CD14-positive monocyte (primary cell): ENCODE measurements at regions of chr6 and their contacts with region 1.

Region 1: GRCh38 chr6:56637640-56638039 is 5.0 kb downstream of the DST start:
- DNase-seq: peak; percentile 11 to 35 (median 24)
- H3K4me3 ChIP-seq: no peak overlapping the region
- H3K4me3 Mint-ChIP-seq: no peak overlapping the region
- H3K27ac ChIP-seq: no peak overlapping the region
- H3K27ac Mint-ChIP-seq: no peak overlapping the region
- H3K4me1 ChIP-seq: no peaks in the 10 kb centered on the region
- H3K4me1 Mint-ChIP-seq: no peaks in the 10 kb centered on the region
- H3K27me3 ChIP-seq: no peaks in the 10 kb centered on the region
- H3K27me3 Mint-ChIP-seq: no peaks in the 10 kb centered on the region
- CTCF ChIP-seq: peak; percentile 82

Region 2: DNA sequence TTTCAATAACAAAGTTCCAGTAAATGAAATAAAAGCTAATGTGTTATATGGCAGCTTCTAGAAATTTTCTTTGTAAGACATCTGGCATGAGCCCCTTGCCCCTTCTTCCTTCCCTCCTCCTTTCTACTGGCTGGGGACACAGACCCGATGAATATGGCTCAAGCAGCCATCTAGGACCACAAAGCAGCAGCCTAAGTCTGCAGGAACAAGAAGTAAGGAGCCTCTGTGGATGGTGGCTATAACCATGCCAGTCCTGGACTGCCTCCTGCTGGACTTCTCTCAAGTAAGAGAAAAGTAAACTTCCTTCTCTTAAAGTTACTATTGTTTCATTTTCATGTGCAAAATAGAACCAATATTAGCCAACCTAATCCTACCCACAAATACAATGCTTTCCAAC is 119.9 kb after region 1 on chr6:
- intact Hi-C with region 1: loop called (anchors 10 kb)
- DNase-seq: peak; percentile 48 to 68 (median 63)
- H3K4me3 ChIP-seq: no peak overlapping the region
- H3K4me3 Mint-ChIP-seq: no peak overlapping the region
- H3K27ac ChIP-seq: no peak overlapping the region
- H3K27ac Mint-ChIP-seq: peak overlapping the region in 1 of 7 donors; percentile 23
- H3K4me1 ChIP-seq: peaks cover 0 to 8% of the 10 kb centered on the region in 2 donors
- H3K4me1 Mint-ChIP-seq: peaks cover 21% of the 10 kb centered on the region
- H3K27me3 ChIP-seq: no peaks in the 10 kb centered on the region
- H3K27me3 Mint-ChIP-seq: no peaks in the 10 kb centered on the region
- CTCF ChIP-seq: peak; percentile 67

Region 3: DNA sequence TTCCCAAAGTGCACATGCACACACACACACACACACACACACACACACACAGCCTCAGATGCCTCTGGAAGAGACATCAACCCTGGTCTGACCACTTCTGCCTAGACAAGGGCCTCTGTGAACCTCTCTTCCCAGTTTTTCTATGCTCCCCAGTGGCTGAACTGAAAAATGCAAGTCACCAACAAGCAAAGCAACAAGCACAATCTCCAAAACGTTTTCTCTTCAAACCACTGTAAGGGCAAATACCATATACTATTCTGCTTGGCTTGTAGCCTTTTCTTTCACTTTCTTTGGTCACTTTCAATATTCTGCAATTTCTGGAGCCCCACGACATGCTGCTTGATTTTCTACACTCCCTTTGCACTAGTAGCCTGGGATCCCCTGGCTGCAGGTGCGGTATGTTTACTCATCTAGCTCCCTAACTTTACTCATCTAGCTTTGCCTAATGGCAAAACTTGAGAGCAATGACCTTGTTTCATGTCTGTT is 126.5 kb after region 1 on chr6:
- intact Hi-C with region 1: loop called (anchors 10 kb)
- DNase-seq: peak in 2 of 3 donors; percentile 9 to 21
- H3K4me3 ChIP-seq: no peak overlapping the region
- H3K4me3 Mint-ChIP-seq: no peak overlapping the region
- H3K27ac ChIP-seq: no peak overlapping the region
- H3K27ac Mint-ChIP-seq: no peak overlapping the region
- H3K4me1 ChIP-seq: peaks cover 0 to 3% of the 10 kb centered on the region in 2 donors
- H3K4me1 Mint-ChIP-seq: peaks cover 14% of the 10 kb centered on the region
- H3K27me3 ChIP-seq: no peaks in the 10 kb centered on the region
- H3K27me3 Mint-ChIP-seq: peaks cover 0 to 2% (median 0%) of the 10 kb centered on the region in 3 donors
- CTCF ChIP-seq: peak; percentile 47

Region 4: GRCh38 chr6:56796196-56796532 is 158.5 kb after region 1 on chr6:
- intact Hi-C with region 1: no loop called
- DNase-seq: no peak
- H3K4me3 ChIP-seq: no peak overlapping the region
- H3K4me3 Mint-ChIP-seq: no peak overlapping the region
- H3K27ac ChIP-seq: no peak overlapping the region
- H3K27ac Mint-ChIP-seq: no peak overlapping the region
- H3K4me1 ChIP-seq: no peaks in the 10 kb centered on the region
- H3K4me1 Mint-ChIP-seq: peaks cover 10% of the 10 kb centered on the region
- H3K27me3 ChIP-seq: no peaks in the 10 kb centered on the region
- H3K27me3 Mint-ChIP-seq: no peaks in the 10 kb centered on the region
- CTCF ChIP-seq: no peak

Region 5: GRCh38 chr6:56851541-56852259 is 214.1 kb after region 1 on chr6:
- intact Hi-C with region 1: loop called in 1 of 2 experiments (anchors 5 kb)
- DNase-seq: peak; percentile 38 to 64 (median 57)
- H3K4me3 ChIP-seq: peak overlapping the region; percentile 27 to 70 (median 49)
- H3K4me3 Mint-ChIP-seq: peak overlapping the region; percentile 84 to 95
- H3K27ac ChIP-seq: no peak overlapping the region
- H3K27ac Mint-ChIP-seq: peak overlapping the region in 3 of 7 donors; percentile 7 to 61 (median 17)
- H3K4me1 ChIP-seq: peaks cover 14 to 16% of the 10 kb centered on the region in 2 donors
- H3K4me1 Mint-ChIP-seq: peaks cover 30% of the 10 kb centered on the region
- H3K27me3 ChIP-seq: no peaks in the 10 kb centered on the region
- H3K27me3 Mint-ChIP-seq: peaks cover 7 to 11% (median 7%) of the 10 kb centered on the region in 3 donors
- CTCF ChIP-seq: peak; percentile 75